ENCODE measurements at regions of chrX and their contacts with region 1.

Region 1: DNA sequence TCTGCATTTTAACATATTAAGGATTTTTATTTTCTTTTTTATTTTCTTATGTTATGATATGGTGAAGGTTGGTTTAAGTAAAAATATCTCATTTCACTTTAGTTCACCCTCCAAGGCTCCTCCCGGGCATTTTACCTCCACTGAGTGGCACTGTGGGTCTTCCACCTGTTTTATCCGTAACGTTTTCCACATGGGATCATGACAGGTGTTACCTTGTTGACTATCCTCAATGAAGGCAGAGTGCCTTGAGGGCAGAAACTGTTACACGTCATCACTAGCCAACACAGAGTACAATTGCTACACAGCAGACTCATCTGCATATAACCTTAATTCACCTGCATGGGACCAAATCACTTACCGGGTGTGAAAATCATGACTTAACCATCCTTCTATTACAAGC is 105.8 kb downstream of the GEMIN8 start:
- DNase-seq: no peak
- H3K4me3 ChIP-seq: no peak overlapping the region
- H3K27ac ChIP-seq: no peak overlapping the region
- H3K4me1 ChIP-seq: no peaks in the 10 kb centered on the region
- H3K27me3 ChIP-seq: no peaks in the 10 kb centered on the region
- CTCF ChIP-seq: no peak

Region 2: GRCh38 chrX:14051416-14051815 is 127.6 kb after region 1 on chrX:
- CTCF ChIA-PET with region 1: no interaction called
- POLR2A ChIA-PET with region 1: interaction called, 12 read pairs
- intact Hi-C with region 1: no loop called
- DNase-seq: no peak
- H3K4me3 ChIP-seq: no peak overlapping the region
- H3K27ac ChIP-seq: no peak overlapping the region
- H3K4me1 ChIP-seq: no peaks in the 10 kb centered on the region
- H3K27me3 ChIP-seq: peaks cover 1% of the 10 kb centered on the region
- CTCF ChIP-seq: 0 out of 2 replicates have a peak, but pooled peaks have one; percentile 25

Region 3: GRCh38 chrX:14084466-14084865 is 160.6 kb after region 1 on chrX:
- CTCF ChIA-PET with region 1: no interaction called
- POLR2A ChIA-PET with region 1: no interaction called
- intact Hi-C with region 1: no loop called
- DNase-seq: no peak
- H3K4me3 ChIP-seq: no peak overlapping the region
- H3K27ac ChIP-seq: no peak overlapping the region
- H3K4me1 ChIP-seq: no peaks in the 10 kb centered on the region
- H3K27me3 ChIP-seq: peaks cover 20% of the 10 kb centered on the region
- CTCF ChIP-seq: no peak

Measured in A673 (cell line).